HEK293T (cell line): ENCODE measurements at regions of chr20 and their contacts with region 1.

Region 1: DNA sequence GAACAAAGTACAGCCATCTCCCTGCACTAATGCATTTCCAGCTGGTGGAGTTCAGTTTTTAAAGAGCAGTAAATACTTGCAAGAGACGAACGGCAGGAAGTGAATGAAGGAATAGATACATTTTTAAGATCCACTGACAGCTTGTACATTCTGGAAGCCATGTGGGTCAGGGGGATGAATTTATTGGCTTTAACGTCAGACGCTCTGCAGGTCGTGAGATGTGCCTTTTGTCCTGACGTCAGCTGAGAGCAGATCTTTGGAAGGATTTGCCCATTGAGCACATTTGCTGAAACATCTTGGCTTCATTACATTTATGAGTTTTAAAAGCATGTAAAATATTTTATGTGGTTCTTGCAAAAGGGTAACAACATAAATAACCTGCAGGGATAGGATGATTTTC is 29.5 kb upstream of the SALL4 start:
- DNase-seq: no peak

Region 2: GRCh38 chr20:51624157-51624731 is 207.6 kb before region 1 on chr20:
- CTCF ChIA-PET with region 1: no interaction called
- POLR2A ChIA-PET with region 1: no interaction called
- DNase-seq: peak; percentile 79

Region 3: DNA sequence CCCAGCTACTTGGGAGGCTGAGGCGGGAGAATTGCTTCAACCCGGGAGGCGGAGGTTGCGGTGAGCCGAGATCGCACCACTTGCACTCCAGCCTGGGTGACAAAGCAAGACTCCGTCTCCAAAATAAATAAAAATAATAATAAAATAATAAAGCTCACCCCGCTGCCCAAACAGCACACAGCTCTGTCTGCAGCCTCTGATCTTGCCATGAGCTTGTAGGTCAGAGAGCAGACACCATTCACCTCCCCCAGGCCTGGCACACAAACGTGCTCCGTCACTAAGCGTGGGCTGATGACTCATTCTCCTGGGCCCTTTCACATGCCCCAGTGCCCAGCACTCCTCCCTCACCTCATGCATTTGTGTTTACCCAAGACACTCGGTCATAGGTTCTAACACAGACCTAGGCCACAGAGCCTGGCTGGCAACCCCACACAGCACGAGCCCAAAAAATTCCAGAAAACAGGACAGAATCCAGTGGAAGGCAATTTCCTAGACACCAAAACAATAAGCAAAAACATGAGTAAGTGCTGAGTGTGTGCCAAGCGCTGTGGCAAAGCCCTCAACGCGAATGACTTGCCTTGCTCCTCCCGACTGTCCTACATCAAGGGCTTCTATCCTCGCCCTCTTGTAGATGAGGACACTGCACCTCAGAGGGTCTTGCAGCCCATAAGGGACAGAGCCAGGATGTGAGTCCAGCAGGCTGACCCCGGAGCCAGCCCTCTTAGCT is 81.7 kb before region 1 on chr20:
- CTCF ChIA-PET with region 1: no interaction called
- POLR2A ChIA-PET with region 1: no interaction called
- DNase-seq: no peak

Region 4: GRCh38 chr20:51811042-51811355 is 20.9 kb before region 1 on chr20:
- CTCF ChIA-PET with region 1: no interaction called
- POLR2A ChIA-PET with region 1: no interaction called
- DNase-seq: no peak

Region 5: DNA sequence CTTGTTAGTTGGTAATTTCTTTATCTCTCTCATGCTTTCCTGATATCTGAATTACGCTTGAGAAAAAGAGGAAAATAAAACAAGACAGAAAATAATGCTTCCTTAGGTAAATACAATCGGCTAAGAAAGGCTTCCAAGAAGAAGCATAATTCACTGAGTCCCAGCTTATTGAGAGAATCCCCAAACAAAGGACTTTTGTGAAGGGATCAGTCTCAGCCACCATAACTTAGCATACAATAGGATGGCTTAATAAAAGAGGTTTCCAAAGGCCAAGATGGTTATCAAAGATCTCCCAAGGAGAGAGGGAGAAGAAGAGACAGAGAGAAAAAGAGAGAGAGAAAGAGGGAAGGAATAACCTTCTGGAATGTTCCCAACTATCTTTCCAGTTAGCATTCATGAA is 16.5 kb after region 1 on chr20:
- CTCF ChIA-PET with region 1: no interaction called
- POLR2A ChIA-PET with region 1: no interaction called
- DNase-seq: no peak

Region 6: GRCh38 chr20:51889466-51889865 is 57.6 kb after region 1 on chr20:
- CTCF ChIA-PET with region 1: interaction called, 11 read pairs
- POLR2A ChIA-PET with region 1: no interaction called
- DNase-seq: no peak